WTC11 (cell line): ENCODE measurements at regions of chr1 and their contacts with region 1.

Region 1: DNA sequence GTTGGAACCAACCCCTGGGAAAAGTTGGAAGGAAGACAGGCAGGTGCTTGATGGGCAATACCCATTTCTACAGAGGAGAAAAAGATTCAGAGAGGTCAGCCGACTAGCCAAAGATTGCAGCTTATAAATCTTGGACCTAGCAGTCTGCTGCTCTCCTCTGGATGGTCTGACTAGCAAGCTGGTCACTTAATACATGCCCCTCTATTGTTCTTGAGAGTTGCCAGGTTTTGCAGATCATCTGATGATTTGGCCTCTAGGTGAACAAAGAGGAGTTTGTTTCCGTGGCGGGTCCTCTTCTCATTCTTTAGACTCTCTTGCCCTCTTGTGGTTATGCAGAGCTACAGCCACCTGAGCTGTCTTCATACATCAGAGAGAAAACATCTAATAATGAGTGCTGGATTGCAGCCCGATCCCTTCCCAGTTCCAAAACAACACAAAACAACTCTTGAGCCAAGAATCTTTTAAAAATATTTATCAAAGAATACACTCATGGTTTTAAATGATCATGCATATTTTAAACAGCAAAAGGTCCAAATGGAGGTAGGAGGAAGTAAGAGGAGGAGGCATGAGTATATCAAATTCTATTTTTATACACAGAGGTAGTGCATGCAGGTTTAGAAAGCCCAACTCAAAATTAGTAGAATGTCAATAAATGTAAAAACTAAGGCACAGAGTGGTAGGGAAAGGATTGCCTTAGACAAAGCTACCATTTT is 115.7 kb downstream of the SLC30A10 start:
- DNase-seq: peak; percentile 51
- ATAC-seq: peak; percentile 89
- H3K4me3 Mint-ChIP-seq: no peak overlapping the region
- H3K27ac Mint-ChIP-seq: no peak overlapping the region
- H3K4me1 Mint-ChIP-seq: peaks cover 5% of the 10 kb centered on the region; the same call in 1 of the 2 replicates
- H3K27me3 Mint-ChIP-seq: no peaks in the 10 kb centered on the region
- CTCF ChIP-seq: peak; percentile 68

Region 2: DNA sequence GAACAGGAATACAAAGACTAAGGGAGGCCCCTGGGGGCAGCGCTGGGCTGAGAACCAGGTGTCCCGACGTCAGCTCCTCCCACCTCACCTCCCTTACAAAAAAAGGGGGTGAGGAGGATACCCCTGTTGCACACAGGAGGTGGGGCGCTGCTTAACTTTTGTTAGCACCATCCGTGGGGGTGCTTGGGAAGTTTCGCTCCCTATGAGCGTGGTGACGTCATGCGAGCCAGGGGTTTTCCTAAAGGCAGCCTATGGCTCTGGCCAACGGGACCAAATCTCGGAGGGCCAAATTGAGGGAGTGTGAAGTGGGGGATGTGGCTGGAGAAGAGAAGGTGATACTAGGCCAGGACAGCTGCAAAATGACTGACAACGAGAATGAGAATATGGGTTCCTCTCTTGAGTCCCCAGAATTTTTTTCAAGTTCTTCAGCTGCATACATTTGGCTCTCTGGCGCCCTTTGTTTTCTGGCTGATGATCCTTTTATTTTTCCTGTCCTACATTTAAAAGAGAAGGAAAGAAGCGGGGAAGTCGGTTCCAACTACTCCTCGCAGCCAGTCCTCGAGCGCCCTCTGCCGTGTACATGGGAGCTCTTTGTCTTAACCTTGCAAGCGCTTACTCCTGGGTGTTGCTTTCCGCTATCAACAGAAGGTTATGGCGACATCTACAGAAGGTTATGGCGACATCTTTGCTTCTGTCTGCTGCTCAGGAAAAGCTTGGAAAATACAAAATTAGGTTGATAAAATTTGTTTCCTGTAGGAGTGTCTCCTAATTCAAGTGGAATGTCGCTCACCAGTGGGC is 151.8 kb before region 1 on chr1:
- CTCF ChIA-PET with region 1: interaction called, 24 read pairs
- POLR2A ChIA-PET with region 1: no interaction called
- DNase-seq: peak; percentile 95
- ATAC-seq: peak; percentile 95
- H3K4me3 Mint-ChIP-seq: peak overlapping the region; percentile 64
- H3K27ac Mint-ChIP-seq: peak overlapping the region; percentile 38
- H3K4me1 Mint-ChIP-seq: peaks cover 27% of the 10 kb centered on the region
- H3K27me3 Mint-ChIP-seq: no peaks in the 10 kb centered on the region
- CTCF ChIP-seq: peak; percentile 79

Region 3: DNA sequence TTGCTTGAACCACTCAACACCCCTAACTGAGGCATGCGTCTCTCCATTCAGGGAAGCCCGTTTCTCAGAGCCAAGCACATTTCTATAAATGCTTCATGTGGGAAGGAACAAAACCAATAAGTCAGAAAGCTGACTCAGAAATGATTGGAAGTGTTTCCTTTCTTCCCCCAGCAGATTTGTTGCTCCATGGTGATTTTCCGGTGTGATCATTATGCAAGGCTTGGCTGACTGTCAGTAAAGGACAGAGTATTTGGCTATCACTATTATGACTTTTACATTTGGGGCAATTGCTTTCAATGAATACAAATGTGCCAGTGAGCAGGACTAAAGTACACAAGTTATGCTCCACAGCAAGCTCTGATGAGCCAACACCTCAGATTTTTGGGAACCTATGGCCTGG is 146.4 kb before region 1 on chr1:
- CTCF ChIA-PET with region 1: interaction called, 24 read pairs
- POLR2A ChIA-PET with region 1: no interaction called
- DNase-seq: no peak
- ATAC-seq: no peak
- H3K4me3 Mint-ChIP-seq: no peak overlapping the region
- H3K27ac Mint-ChIP-seq: no peak overlapping the region
- H3K4me1 Mint-ChIP-seq: peaks cover 7% of the 10 kb centered on the region
- H3K27me3 Mint-ChIP-seq: no peaks in the 10 kb centered on the region
- CTCF ChIP-seq: no peak

Region 4: DNA sequence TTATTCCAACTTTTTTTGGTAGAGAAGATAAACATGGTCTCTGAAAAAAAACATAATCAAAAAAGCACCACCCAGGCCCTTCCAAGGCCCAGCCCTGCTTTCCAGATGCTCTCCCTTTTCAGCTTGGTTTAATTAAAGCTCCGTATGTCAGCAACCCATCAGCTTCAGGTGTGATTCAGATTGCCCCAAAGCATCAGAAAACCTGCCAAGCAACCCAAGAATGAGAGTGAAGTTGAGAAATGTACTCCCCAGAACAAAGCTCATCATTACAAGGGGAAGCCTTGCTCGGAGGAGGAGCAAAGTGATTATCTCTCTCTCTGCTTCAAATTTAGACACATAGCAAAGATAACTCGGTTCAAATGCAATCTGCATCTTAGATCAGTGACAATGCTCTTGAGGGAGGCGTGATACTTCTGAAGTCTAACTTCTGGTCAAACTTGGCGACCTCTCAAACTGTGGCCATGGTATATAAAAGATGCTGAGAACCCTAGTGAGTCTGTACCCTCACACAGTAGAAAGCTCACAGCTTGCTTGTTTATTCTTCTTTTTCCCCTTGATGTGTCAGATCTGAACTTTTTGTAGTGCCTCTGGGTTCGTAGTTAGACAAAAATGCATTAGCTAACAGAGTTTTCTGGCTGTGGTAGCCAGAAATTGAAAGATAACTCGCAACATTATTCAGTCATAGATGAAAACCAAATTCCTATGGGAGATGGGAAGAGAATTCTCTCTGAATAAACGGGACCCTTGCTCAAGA is 136.5 kb before region 1 on chr1:
- CTCF ChIA-PET with region 1: interaction called, 10 read pairs
- POLR2A ChIA-PET with region 1: no interaction called
- DNase-seq: no peak
- ATAC-seq: no peak
- H3K4me3 Mint-ChIP-seq: no peak overlapping the region
- H3K27ac Mint-ChIP-seq: no peak overlapping the region
- H3K4me1 Mint-ChIP-seq: no peaks in the 10 kb centered on the region
- H3K27me3 Mint-ChIP-seq: no peaks in the 10 kb centered on the region
- CTCF ChIP-seq: no peak

Region 5: GRCh38 chr1:219825355-219825754 is 12.7 kb after region 1 on chr1:
- CTCF ChIA-PET with region 1: interaction called, 11 read pairs
- POLR2A ChIA-PET with region 1: interaction called, 4 read pairs
- DNase-seq: no peak
- ATAC-seq: no peak; the same call in 1 of the 2 replicates
- H3K4me3 Mint-ChIP-seq: no peak overlapping the region
- H3K27ac Mint-ChIP-seq: peak overlapping the region; percentile 31
- H3K4me1 Mint-ChIP-seq: peaks cover 42% of the 10 kb centered on the region
- H3K27me3 Mint-ChIP-seq: no peaks in the 10 kb centered on the region
- CTCF ChIP-seq: no peak